ENCODE measurements at regions of chr2 and their contacts with region 1.

Region 1: DNA sequence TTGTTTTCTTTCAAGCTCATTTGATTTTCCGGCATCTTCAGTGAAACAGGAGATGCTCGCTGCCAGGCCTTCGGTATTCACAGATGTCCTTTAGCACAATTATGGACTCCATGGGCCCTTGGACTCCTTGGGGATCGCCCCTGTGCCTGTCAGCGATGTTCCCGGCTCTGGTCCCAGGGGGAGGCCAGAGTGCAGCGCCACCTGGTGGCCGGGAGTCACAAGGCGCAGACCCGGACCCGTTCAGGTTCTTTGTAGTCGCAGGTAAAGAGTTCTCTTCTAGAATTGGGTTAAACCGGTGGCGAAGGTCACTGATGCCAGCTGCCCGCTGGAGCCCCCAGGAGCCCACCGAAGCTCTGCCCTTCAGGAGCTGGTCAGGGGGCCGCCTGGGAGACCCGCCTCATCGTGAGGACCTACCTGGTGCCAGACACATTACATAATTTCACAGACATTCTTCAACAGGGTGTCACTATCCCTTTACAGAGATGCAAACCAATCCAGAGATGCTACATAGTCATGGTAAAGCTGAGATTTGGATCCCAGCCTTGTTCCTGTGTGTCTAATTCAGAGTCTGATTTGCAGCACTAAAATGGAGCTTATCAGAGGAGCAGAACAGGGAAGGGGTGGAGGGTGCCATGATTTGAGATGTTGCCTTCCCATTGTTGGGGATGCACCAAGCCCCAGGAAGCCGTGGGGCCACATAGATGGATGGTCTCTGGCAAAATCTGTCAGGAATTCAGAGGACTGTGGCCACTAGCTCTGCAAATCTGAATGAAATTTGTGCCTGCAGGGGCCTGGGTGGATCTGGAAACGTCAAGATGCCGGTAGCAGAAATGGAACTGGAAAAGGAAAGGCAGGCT is 6.0 kb upstream of the INPP5D start:
- DNase-seq: peak; percentile 76
- ATAC-seq: peak; percentile 76
- H3K4me3 Mint-ChIP-seq: no peak overlapping the region
- H3K27ac Mint-ChIP-seq: no peak overlapping the region
- H3K4me1 Mint-ChIP-seq: peaks cover 18% of the 10 kb centered on the region
- H3K27me3 Mint-ChIP-seq: peaks cover 18% of the 10 kb centered on the region

Region 2: GRCh38 chr2:232757905-232758304 is 296.3 kb before region 1 on chr2:
- CTCF ChIA-PET with region 1: interaction called, 13 read pairs
- POLR2A ChIA-PET with region 1: interaction called, 3 read pairs
- DNase-seq: no peak
- ATAC-seq: no peak
- H3K4me3 Mint-ChIP-seq: no peak overlapping the region
- H3K27ac Mint-ChIP-seq: peak overlapping the region; percentile 52
- H3K4me1 Mint-ChIP-seq: peaks cover 18% of the 10 kb centered on the region
- H3K27me3 Mint-ChIP-seq: no peaks in the 10 kb centered on the region

Region 3: DNA sequence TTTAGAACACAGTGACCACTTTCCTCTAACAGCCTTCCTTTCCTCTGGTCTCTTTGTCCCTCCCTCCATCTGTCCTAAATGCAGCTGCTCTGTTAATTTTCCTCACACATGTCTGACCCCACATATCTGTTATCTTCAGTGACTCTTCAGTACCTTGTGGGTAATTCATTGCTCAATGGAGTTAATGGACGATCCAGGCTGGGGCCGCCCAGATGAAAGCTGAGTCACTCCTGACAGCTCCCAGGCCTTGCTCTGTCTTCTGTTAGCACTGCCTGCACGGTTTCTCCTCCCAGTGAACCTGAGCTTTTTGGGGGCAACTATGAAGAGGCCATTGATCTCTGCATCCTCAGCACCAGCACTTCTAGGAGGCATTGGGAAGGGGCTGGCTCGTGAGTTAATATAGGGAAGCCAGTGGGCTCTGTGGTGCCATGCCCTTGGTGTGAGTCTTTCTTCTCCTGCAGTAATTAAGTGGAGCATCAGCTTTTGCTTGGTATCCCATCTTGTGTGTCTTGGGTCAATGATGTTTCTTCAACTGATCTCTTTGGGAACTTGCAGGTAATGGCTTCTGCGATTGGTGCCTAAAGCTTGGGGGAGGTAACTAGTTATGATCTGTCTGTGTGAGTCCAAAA is 116.8 kb before region 1 on chr2:
- CTCF ChIA-PET with region 1: no interaction called
- POLR2A ChIA-PET with region 1: no interaction called
- DNase-seq: no peak
- ATAC-seq: no peak
- H3K4me3 Mint-ChIP-seq: no peak overlapping the region
- H3K27ac Mint-ChIP-seq: no peak overlapping the region
- H3K4me1 Mint-ChIP-seq: no peaks in the 10 kb centered on the region
- H3K27me3 Mint-ChIP-seq: peaks cover 22% of the 10 kb centered on the region

Region 4: DNA sequence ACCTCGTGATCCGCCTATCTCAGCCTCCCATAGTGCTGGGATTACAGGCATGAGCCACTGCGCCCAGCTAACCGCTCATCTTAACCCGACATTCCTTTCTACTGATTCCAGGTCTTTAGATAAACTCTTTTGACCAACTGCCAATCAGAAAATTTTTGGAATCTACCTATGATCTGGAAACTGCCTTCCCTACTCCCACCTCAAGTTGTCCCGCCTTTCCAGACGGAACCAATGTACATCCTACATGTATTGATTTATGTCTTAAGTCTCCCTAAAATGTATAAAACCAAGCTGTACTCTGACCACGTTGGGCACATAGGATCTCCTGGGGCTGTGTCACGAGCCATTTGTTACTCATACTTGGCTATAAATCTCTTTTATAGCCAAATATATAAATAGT is 24.8 kb before region 1 on chr2:
- CTCF ChIA-PET with region 1: interaction called, 13 read pairs
- POLR2A ChIA-PET with region 1: no interaction called
- DNase-seq: no peak
- ATAC-seq: no peak
- H3K4me3 Mint-ChIP-seq: no peak overlapping the region
- H3K27ac Mint-ChIP-seq: no peak overlapping the region
- H3K4me1 Mint-ChIP-seq: no peaks in the 10 kb centered on the region
- H3K27me3 Mint-ChIP-seq: peaks cover 2% of the 10 kb centered on the region

Region 5: GRCh38 chr2:233084488-233084887 is 30.3 kb after region 1 on chr2:
- CTCF ChIA-PET with region 1: interaction called, 19 read pairs
- POLR2A ChIA-PET with region 1: interaction called, 136 read pairs
- DNase-seq: peak; percentile 73
- ATAC-seq: peak; percentile 24
- H3K4me3 Mint-ChIP-seq: peak overlapping the region; percentile 71
- H3K27ac Mint-ChIP-seq: peak overlapping the region; percentile 93
- H3K4me1 Mint-ChIP-seq: peaks cover 84% of the 10 kb centered on the region
- H3K27me3 Mint-ChIP-seq: no peaks in the 10 kb centered on the region

Region 6: DNA sequence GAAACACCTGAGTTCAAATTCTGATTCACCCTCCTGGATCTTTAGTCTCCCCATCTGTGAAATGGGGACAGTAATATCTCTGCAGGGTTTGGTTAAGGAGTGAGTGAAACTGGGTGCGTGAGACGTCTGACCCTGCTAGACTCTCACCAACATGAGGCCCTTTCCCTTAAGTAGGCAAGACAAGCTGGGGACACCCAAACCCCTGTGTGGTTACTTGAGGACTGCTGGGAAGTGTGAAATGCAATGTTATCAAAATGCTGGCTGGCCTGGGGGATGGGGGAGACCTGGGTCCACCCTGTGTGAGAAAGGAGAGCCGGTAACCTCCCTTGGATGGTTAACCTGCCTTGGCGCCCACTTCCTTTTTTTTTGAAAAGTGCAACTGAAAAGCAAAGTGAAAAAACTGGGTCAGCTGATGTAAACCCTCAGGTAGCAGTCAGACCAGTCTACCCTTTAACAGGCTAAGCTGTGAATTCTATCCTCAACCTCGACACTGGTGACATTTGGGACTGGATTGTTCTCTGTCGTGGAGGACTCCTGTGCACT is 88.3 kb after region 1 on chr2:
- CTCF ChIA-PET with region 1: interaction called, 12 read pairs
- POLR2A ChIA-PET with region 1: interaction called, 19 read pairs
- DNase-seq: peak; percentile 79
- ATAC-seq: peak; percentile 81
- H3K4me3 Mint-ChIP-seq: peak overlapping the region; percentile 57
- H3K27ac Mint-ChIP-seq: peak overlapping the region; percentile 91
- H3K4me1 Mint-ChIP-seq: peaks cover 54% of the 10 kb centered on the region
- H3K27me3 Mint-ChIP-seq: no peaks in the 10 kb centered on the region